ENCODE measurements at regions of chr12 and their contacts with region 1.

Region 1: GRCh38 chr12:52708010-52708409 is 4.7 kb upstream of the KRT77 start:
- DNase-seq: no peak
- H3K4me3 ChIP-seq: no peak overlapping the region
- H3K27ac ChIP-seq: no peak overlapping the region
- H3K27me3 ChIP-seq: peaks cover 20% of the 10 kb centered on the region
- CTCF ChIP-seq: no peak

Region 2: GRCh38 chr12:52667511-52667910 is 40.5 kb before region 1 on chr12:
- CTCF ChIA-PET with region 1: no interaction called
- POLR2A ChIA-PET with region 1: no interaction called
- DNase-seq: no peak
- H3K4me3 ChIP-seq: no peak overlapping the region
- H3K27ac ChIP-seq: no peak overlapping the region
- H3K27me3 ChIP-seq: peaks cover 5% of the 10 kb centered on the region
- CTCF ChIP-seq: peak; percentile 32

Region 3: GRCh38 chr12:52682938-52683574 is 25.0 kb before region 1 on chr12:
- CTCF ChIA-PET with region 1: interaction called, 11 read pairs
- POLR2A ChIA-PET with region 1: no interaction called
- DNase-seq: no peak
- H3K4me3 ChIP-seq: no peak overlapping the region
- H3K27ac ChIP-seq: no peak overlapping the region
- H3K27me3 ChIP-seq: peaks cover 11% of the 10 kb centered on the region
- CTCF ChIP-seq: no peak

Measured in AG04450 (cell line).